Common myeloid progenitor, CD34-positive (primary cell): ENCODE measurements at regions of chr1 and their contacts with region 1.

Region 1: GRCh38 chr1:153626922-153627796 is at the start of gene S100A13:
- DNase-seq: peak in 2 of 3 donors; percentile 68 to 70
- H3K4me3 ChIP-seq: peak within 1 kb of the TSS in 4 of 7 experiments; percentile 22 to 66 (median 42)
- H3K27ac ChIP-seq: peak within 1 kb of the TSS in 1 of 2 experiments; percentile 67
- H3K4me1 ChIP-seq: peaks cover 0 to 22% (median 11%) of the 10 kb centered on the region in 4 experiments
- H3K27me3 ChIP-seq: peaks cover 0 to 2% (median 0%) of the 10 kb centered on the region in 5 experiments

Region 2: GRCh38 chr1:153510984-153511410 is 116.2 kb before region 1 on chr1:
- CTCF ChIA-PET with region 1: interaction called, 25 read pairs
- POLR2A ChIA-PET with region 1: no interaction called
- DNase-seq: peak; percentile 61 to 74 (median 63)
- H3K4me3 ChIP-seq: no peak overlapping the region
- H3K27ac ChIP-seq: no peak overlapping the region
- H3K4me1 ChIP-seq: peaks cover 0 to 14% (median 9%) of the 10 kb centered on the region in 4 experiments
- H3K27me3 ChIP-seq: no peaks in the 10 kb centered on the region

Region 3: GRCh38 chr1:153598309-153599172 is 28.6 kb before region 1 on chr1:
- CTCF ChIA-PET with region 1: interaction called, 10 read pairs
- POLR2A ChIA-PET with region 1: no interaction called
- DNase-seq: peak; percentile 88 to 99 (median 97)
- H3K4me3 ChIP-seq: peak overlapping the region in 4 of 7 experiments; percentile 2 to 48 (median 32)
- H3K27ac ChIP-seq: peak overlapping the region; percentile 94
- H3K4me1 ChIP-seq: peaks cover 0 to 40% (median 17%) of the 10 kb centered on the region in 4 experiments
- H3K27me3 ChIP-seq: no peaks in the 10 kb centered on the region

Region 4: DNA sequence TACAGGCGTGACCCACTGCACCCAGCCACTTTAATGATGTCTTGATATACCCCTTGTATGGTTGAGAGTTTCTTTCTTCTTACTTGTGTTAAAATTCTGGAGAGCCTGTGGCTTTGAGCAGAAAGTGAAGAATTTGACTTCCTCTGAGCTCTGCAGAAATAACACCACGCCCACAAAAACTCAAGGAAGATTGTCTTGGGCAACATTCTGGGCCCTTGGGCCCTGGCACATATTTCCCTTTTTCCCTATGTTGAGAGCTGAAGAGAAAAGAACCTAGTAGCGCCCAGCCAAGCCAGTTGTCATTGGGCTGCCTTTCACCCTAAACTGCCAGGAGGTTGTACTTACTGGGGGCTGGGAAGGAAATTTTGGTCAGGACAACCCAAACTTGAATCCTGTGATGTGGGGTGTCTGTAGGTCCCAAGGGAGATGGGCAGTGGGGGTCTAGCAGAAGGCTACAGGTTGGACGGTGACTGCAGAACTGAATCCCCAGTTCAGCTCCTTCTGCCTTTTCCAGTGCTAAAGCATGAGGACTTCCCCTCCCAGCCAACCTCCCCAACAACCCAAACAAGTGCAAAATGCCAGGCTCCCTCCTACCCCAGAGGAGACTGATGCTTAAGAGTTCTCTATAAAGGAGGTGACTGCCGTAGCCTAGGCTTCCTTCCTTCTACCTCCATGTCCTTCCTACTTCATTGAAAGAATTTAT is 19.7 kb after region 1 on chr1:
- CTCF ChIA-PET with region 1: interaction called, 15 read pairs
- POLR2A ChIA-PET with region 1: no interaction called
- DNase-seq: no peak
- H3K4me3 ChIP-seq: no peak overlapping the region
- H3K27ac ChIP-seq: no peak overlapping the region
- H3K4me1 ChIP-seq: peaks cover 0 to 7% (median 2%) of the 10 kb centered on the region in 4 experiments
- H3K27me3 ChIP-seq: no peaks in the 10 kb centered on the region

Region 5: GRCh38 chr1:154141240-154141639 is 514.1 kb after region 1 on chr1:
- CTCF ChIA-PET with region 1: no interaction called
- POLR2A ChIA-PET with region 1: no interaction called
- DNase-seq: no peak
- H3K4me3 ChIP-seq: no peak overlapping the region
- H3K27ac ChIP-seq: no peak overlapping the region
- H3K4me1 ChIP-seq: no peaks in the 10 kb centered on the region
- H3K27me3 ChIP-seq: no peaks in the 10 kb centered on the region